ENCODE measurements at regions of chr14 and their contacts with region 1.

Region 1: GRCh38 chr14:65102441-65103149 is at the start of gene MAX:
- DNase-seq: peak; percentile 97 to 98
- ATAC-seq: peak; percentile 96 to 97 (median 97)
- H3K4me3 ChIP-seq: peak within 1 kb of the TSS; percentile 64 to 98 (median 93)
- H3K27ac ChIP-seq: peak within 1 kb of the TSS; percentile 52 to 98 (median 92)
- H3K4me1 ChIP-seq: peaks cover 10 to 46% (median 39%) of the 10 kb centered on the region in 9 donors
- H3K27me3 ChIP-seq: no peaks in the 10 kb centered on the region
- CTCF ChIP-seq: peak in 1 of 9 donors; percentile 6
- total RNA-seq, gene MAX: 54.5 to 95.7 (median 73.7) TPM

Region 2: GRCh38 chr14:64914237-64914971 is 188.2 kb before region 1 on chr14 and contains the start of gene CHURC1:
- intact Hi-C with region 1: loop called in 1 of 10 experiments (anchors 5 kb)
- DNase-seq: peak; percentile 97 to 99
- ATAC-seq: peak; percentile 98 to 100 (median 99)
- H3K4me3 ChIP-seq: peak within 1 kb of the TSS; percentile 71 to 99 (median 90)
- H3K27ac ChIP-seq: peak within 1 kb of the TSS; percentile 64 to 99 (median 94)
- H3K4me1 ChIP-seq: peaks cover 8 to 57% (median 35%) of the 10 kb centered on the region in 9 donors
- H3K27me3 ChIP-seq: peaks cover 0 to 2% (median 0%) of the 10 kb centered on the region in 7 donors
- CTCF ChIP-seq: no peak
- total RNA-seq, gene CHURC1: 59.2 to 98.8 (median 76.3) TPM

Region 3: DNA sequence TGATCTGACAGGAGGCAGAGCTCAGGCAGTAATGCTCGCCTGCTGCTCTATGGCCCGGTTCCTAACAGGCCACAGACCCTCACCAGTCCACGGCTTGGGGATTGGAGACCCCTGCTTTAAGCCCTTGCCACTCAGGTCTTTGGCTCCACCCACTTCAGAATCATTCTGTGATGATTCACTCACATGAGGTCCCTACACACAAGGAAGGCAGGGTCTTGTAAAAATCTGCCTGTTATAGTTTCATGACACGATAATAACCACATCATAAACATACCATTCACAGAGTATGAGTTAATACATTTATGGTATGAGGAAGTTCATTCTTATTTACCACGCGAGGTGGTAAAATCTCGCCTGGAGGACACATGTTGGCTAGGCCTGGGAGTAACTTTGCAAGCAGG is 28.7 kb after region 1 on chr14:
- intact Hi-C with region 1: no loop called
- DNase-seq: no peak
- ATAC-seq: no peak
- H3K4me3 ChIP-seq: no peak overlapping the region
- H3K27ac ChIP-seq: no peak overlapping the region
- H3K4me1 ChIP-seq: peaks cover 0 to 4% (median 0%) of the 10 kb centered on the region in 9 donors
- H3K27me3 ChIP-seq: no peaks in the 10 kb centered on the region
- CTCF ChIP-seq: no peak